HCT116 (cell line): ENCODE measurements at regions of chr10 and their contacts with region 1.

Region 1: DNA sequence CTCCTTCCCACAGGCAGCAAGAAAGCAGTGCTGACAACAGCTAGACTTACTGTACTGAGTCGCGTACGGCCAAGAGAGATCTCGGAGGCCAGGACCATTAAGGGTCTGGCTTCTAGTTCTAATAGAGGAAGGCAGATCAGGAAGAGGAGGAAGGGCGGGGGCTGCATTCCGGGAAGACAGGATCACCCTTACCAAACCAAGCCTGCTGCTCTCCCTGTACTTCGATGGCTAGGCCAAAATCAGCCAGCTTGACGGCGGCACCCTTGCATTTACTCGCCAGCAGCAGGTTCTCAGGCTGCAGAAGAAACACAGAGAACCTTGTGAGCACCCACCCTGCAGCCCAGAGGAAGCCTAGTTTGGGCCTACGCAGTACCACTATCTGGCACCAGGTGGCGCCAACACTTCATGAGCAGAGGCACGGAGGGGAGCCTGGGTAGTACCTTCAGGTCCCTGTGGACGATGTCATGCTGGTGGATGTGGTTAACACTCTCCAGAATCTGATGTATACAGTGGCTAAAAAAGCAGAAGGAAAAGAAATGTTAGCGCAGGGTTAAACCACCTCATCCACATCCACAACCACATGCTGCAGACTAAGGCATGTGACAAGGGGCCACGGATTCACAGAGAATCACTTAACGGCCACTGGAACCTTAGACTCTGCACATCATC is 25.4 kb downstream of the CAMK2G start:
- DNase-seq: peak; percentile 47
- ATAC-seq: peak; percentile 98
- H3K4me3 ChIP-seq: no peak overlapping the region
- H3K27ac ChIP-seq: no peak overlapping the region
- H3K4me1 ChIP-seq: no peaks in the 10 kb centered on the region
- H3K27me3 ChIP-seq: no peaks in the 10 kb centered on the region
- CTCF ChIP-seq: peak; percentile 90 to 99 (median 99)
- POLR2A ChIP-seq: no peak
- RAD21 ChIP-seq: peak; percentile 98

Region 2: GRCh38 chr10:73940634-73941221 is 91.8 kb after region 1 on chr10:
- CTCF ChIA-PET with region 1: interaction called, 6 read pairs
- POLR2A ChIA-PET with region 1: no interaction called
- RAD21 ChIA-PET with region 1: no interaction called
- intact Hi-C with region 1: loop called (anchors 1 kb)
- DNase-seq: peak; percentile 37
- ATAC-seq: peak; percentile 97
- H3K4me3 ChIP-seq: peak overlapping the region in 1 of 2 experiments; percentile 31; a peak in 2 of 4 replicates
- H3K27ac ChIP-seq: peak overlapping the region; percentile 7; the same call in 1 of the 2 replicates
- H3K4me1 ChIP-seq: peaks cover 11 to 43% of the 10 kb centered on the region in 2 experiments
- H3K27me3 ChIP-seq: no peaks in the 10 kb centered on the region
- CTCF ChIP-seq: peak; percentile 90 to 95 (median 93); a peak in 5 of 6 replicates
- POLR2A ChIP-seq: no peak
- RAD21 ChIP-seq: peak; percentile 100

Region 3: DNA sequence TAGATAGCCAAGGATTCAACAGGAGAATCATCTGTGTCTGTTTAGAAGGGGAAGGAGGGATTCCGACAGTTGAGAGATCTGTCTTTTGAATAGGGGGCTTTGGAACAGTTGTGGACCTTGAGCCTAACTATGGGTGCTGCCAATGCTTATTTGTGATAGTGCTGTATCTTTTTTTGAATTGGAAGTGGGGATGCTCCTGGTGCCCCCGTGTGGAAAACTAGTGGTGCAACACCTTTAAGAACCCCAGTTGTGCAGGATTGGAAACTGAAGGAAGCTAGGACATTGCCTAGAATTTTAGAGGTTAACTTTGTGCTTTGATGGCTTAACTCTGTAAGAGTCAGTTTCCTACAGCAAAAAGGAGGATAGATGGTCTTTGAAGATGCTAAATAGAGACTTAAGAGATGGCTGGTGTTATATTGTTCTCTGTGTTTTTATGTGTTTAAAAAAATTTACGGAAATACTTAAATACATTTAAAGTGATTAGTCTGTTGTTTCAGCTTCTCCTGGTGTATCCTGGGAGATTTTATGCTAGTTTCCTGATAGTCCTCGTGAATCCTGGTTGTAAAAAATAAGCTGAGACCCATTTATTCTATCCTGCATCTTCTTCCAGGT is 232.3 kb after region 1 on chr10:
- CTCF ChIA-PET with region 1: no interaction called
- POLR2A ChIA-PET with region 1: no interaction called
- RAD21 ChIA-PET with region 1: no interaction called
- intact Hi-C with region 1: loop called (anchors 1 kb)
- DNase-seq: peak; percentile 43
- ATAC-seq: peak; percentile 82
- H3K4me3 ChIP-seq: no peak overlapping the region
- H3K27ac ChIP-seq: peak overlapping the region; percentile 64; the same call in 1 of the 2 replicates
- H3K4me1 ChIP-seq: peaks cover 32 to 48% of the 10 kb centered on the region in 2 experiments
- H3K27me3 ChIP-seq: no peaks in the 10 kb centered on the region
- CTCF ChIP-seq: peak; percentile 59 to 81 (median 80); a peak in 5 of 6 replicates
- POLR2A ChIP-seq: no peak
- RAD21 ChIP-seq: peak; percentile 84